Activated CD8-positive, alpha-beta memory T cell treated with anti-CD3 and anti-CD28 coated beads, Interleukin-2, amount 10 ng/mL, durations not matched to agents 7 days and 5 days (primary cell): ENCODE measurements at regions of chr2 and their contacts with region 1.

Region 1: GRCh38 chr2:201257956-201258665 is 2.2 kb upstream of the CASP8 start:
- DNase-seq: peak; percentile 98
- ATAC-seq: peak; percentile 65
- H3K4me3 Mint-ChIP-seq: peak overlapping the region; percentile 83
- H3K27ac Mint-ChIP-seq: peak overlapping the region; percentile 98
- H3K4me1 Mint-ChIP-seq: peaks cover 66% of the 10 kb centered on the region
- H3K27me3 Mint-ChIP-seq: no peaks in the 10 kb centered on the region

Region 2: GRCh38 chr2:201057087-201057521 is 201.0 kb before region 1 on chr2:
- CTCF ChIA-PET with region 1: no interaction called
- DNase-seq: no peak
- ATAC-seq: no peak
- H3K4me3 Mint-ChIP-seq: no peak overlapping the region
- H3K27ac Mint-ChIP-seq: no peak overlapping the region
- H3K4me1 Mint-ChIP-seq: peaks cover 13% of the 10 kb centered on the region
- H3K27me3 Mint-ChIP-seq: no peaks in the 10 kb centered on the region

Region 3: DNA sequence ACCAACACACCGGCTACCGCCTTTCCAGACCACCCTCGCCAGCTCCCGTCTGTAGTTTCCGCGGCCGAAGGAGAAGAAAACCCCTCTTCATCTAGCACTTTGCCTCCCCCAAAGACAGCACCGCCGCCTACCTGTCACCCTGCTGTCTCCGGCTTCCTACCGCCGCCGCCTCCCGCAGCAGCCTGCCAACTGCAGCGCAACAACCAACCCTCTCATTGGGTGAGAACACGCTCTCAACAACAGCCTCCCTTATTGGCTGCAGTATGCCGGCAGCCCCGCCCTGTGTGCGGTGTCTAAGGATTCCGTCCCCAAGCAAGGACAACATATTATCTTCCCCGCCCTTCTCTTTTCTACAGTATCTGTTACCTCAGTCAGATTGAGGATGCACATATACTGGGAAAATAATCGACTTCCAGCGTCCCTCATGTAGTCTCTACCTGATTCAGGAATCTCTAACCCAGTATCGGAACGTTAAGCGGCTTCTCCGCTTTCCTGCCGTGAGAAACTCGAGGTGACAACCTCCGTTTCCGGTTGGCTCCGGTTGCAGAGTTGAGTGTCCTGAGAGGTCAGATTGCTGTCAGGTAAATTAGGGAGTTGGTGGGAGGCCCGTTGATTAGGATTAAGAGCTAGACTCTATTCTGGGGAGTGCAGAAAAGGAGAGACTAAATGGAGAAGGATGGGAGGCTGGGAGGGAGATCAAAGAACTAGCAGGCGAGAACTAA is 186.5 kb before region 1 on chr2 and contains the starts of genes HYCC2 and NDUFB3:
- CTCF ChIA-PET with region 1: no interaction called
- DNase-seq: peak; percentile 97
- ATAC-seq: peak; percentile 98
- H3K4me3 Mint-ChIP-seq: peak within 1 kb of the TSS; percentile 91
- H3K27ac Mint-ChIP-seq: peak within 1 kb of the TSS; percentile 88
- H3K4me1 Mint-ChIP-seq: peaks cover 55% of the 10 kb centered on the region
- H3K27me3 Mint-ChIP-seq: no peaks in the 10 kb centered on the region
- total RNA-seq, gene HYCC2: 33.4 to 37.2 TPM
- total RNA-seq, gene NDUFB3: 116 to 141 TPM

Region 4: DNA sequence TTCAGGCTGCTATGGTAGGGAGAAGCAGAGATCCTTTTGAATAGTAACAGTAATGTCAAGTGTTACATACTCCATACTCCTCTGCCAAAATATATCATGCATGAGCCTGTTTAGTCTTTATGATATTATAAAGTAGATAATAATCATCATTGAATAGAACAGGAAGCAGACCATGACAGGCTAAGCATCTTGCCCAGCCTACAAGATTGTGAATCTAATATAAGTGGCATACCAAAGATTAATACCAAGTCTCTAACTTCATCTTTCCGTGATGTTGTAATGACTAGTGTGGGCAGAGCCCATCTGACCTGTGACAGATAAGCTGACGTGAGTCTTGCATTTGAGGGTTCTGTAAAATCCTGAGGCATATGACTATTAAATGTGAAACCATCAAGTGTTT is 173.2 kb before region 1 on chr2:
- CTCF ChIA-PET with region 1: no interaction called
- DNase-seq: no peak
- ATAC-seq: no peak
- H3K4me3 Mint-ChIP-seq: no peak overlapping the region
- H3K27ac Mint-ChIP-seq: no peak overlapping the region
- H3K4me1 Mint-ChIP-seq: peaks cover 2% of the 10 kb centered on the region
- H3K27me3 Mint-ChIP-seq: no peaks in the 10 kb centered on the region

Region 5: DNA sequence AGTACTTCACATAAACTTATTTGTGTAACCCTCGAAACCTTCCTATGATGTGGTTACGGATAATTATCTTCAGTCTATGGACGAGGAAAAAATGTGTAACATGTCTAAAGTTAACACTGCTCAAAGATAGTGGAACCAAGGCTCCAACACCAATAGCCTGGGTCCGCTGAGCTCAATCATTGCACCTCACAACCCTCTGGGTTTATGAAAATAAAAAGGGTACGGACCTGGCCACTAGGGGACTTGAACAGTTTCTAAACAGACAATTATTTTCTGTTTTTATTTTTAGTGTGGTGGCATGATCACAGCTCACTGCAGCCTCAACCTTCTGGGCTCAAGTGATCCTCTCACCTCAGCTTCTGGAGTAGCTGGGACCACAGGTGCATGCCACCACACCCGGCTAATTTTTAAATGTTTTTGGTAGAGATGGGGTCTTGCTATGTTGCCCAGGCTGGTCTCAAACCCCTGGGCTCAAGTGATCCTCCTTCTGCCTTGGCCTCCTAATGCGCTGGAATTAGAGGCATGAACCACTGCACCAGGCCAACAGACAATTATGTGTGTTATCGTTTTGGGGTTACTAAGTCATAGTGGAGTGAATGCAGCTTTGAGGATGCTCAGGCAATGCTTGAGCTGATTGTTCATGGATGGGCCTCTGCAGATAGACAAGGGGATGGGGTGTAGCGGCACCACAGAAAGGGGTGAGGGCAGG is 12.3 kb after region 1 on chr2:
- CTCF ChIA-PET with region 1: interaction called, 12 read pairs
- DNase-seq: no peak
- ATAC-seq: no peak
- H3K4me3 Mint-ChIP-seq: no peak overlapping the region
- H3K27ac Mint-ChIP-seq: no peak overlapping the region
- H3K4me1 Mint-ChIP-seq: peaks cover 65% of the 10 kb centered on the region
- H3K27me3 Mint-ChIP-seq: no peaks in the 10 kb centered on the region